CD4-positive, alpha-beta memory T cell (primary cell): ENCODE measurements at regions of chr17 and their contacts with region 1.

Region 1: DNA sequence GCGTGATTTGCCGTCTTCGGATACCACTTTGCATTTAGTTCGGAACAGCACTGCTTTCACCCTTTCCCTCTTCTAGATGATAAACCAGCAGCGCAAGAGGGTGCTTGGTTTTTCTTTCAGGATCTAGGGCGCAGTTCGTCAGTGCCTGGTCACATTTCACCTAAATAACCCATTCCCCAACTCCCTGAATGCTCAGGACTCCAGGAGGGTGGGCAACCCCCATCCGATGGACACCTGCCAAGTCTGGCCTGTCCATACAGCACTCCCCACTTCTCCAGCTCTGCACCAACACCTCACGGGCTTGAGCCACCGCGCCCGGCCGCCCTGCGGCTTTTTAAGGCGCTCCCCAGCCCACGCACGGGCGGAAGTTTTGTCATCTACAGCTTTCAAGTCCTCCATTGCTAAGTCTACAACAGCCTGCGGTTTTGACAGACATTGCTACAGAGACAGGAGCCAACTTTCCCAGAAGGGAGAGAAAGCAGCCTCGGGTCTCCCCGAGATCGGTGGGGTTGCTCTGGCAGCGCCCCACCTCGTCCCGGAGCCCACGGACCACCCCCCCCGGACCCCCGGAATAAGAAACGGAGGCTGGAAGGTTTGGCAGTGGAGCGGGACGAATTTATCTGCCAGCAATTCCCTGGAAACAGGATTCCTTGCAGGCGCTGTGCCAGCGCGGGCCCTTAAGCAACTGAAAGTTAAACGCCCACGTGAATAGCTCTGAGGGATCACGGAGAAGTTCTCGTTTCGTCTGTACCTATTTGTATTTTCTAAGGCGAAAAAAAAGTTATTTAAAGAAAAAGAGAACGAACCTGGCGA is 38.6 kb upstream of the SLFN13 start:
- DNase-seq: peak; percentile 65 to 86 (median 71)
- H3K4me3 ChIP-seq: peak overlapping the region; percentile 57 to 75
- H3K4me3 Mint-ChIP-seq: peak overlapping the region; percentile 94 to 98 (median 96)
- H3K27ac ChIP-seq: peak overlapping the region; percentile 69
- H3K27ac Mint-ChIP-seq: peak overlapping the region; percentile 94 to 99 (median 97)
- H3K4me1 ChIP-seq: peaks cover 42% of the 10 kb centered on the region
- H3K4me1 Mint-ChIP-seq: peaks cover 34 to 89% (median 63%) of the 10 kb centered on the region in 4 donors
- H3K27me3 ChIP-seq: no peaks in the 10 kb centered on the region
- H3K27me3 Mint-ChIP-seq: no peaks in the 10 kb centered on the region

Region 2: GRCh38 chr17:35170968-35171771 is 316.0 kb before region 1 on chr17:
- CTCF ChIA-PET with region 1: interaction called, 3 read pairs
- POLR2A ChIA-PET with region 1: interaction called, 10 read pairs
- intact Hi-C with region 1: loop called (anchors 1 kb)
- DNase-seq: peak; percentile 41 to 75 (median 72)
- H3K4me3 ChIP-seq: peak overlapping the region in 1 of 2 donors; percentile 18
- H3K4me3 Mint-ChIP-seq: peak overlapping the region; percentile 51 to 81 (median 68)
- H3K27ac ChIP-seq: no peak overlapping the region
- H3K27ac Mint-ChIP-seq: peak overlapping the region; percentile 82 to 93 (median 91)
- H3K4me1 ChIP-seq: peaks cover 41% of the 10 kb centered on the region
- H3K4me1 Mint-ChIP-seq: peaks cover 32 to 60% (median 42%) of the 10 kb centered on the region in 4 donors
- H3K27me3 ChIP-seq: no peaks in the 10 kb centered on the region
- H3K27me3 Mint-ChIP-seq: no peaks in the 10 kb centered on the region

Region 3: GRCh38 chr17:35432176-35433074 is 54.7 kb before region 1 on chr17 and contains the start of gene SLFN12:
- CTCF ChIA-PET with region 1: interaction called, 5 read pairs
- POLR2A ChIA-PET with region 1: interaction called, 39 read pairs
- intact Hi-C with region 1: loop called (anchors 2 kb)
- DNase-seq: peak; percentile 67 to 74 (median 72)
- H3K4me3 ChIP-seq: peak within 1 kb of the TSS; percentile 79 to 83
- H3K4me3 Mint-ChIP-seq: peak within 1 kb of the TSS; percentile 93 to 100 (median 97)
- H3K27ac ChIP-seq: peak within 1 kb of the TSS; percentile 61
- H3K27ac Mint-ChIP-seq: peak within 1 kb of the TSS; percentile 88 to 97 (median 94)
- H3K4me1 ChIP-seq: peaks cover 44% of the 10 kb centered on the region
- H3K4me1 Mint-ChIP-seq: peaks cover 32 to 68% (median 48%) of the 10 kb centered on the region in 4 donors
- H3K27me3 ChIP-seq: no peaks in the 10 kb centered on the region
- H3K27me3 Mint-ChIP-seq: no peaks in the 10 kb centered on the region
- total RNA-seq, gene SLFN12: 6.5 to 8.9 TPM

Region 4: GRCh38 chr17:35460354-35460851 is 26.7 kb before region 1 on chr17:
- CTCF ChIA-PET with region 1: interaction called, 7 read pairs
- POLR2A ChIA-PET with region 1: interaction called, 6 read pairs
- intact Hi-C with region 1: loop called (anchors 1 kb)
- DNase-seq: peak; percentile 69 to 81 (median 80)
- H3K4me3 ChIP-seq: peak overlapping the region in 1 of 2 donors; percentile 16
- H3K4me3 Mint-ChIP-seq: peak overlapping the region; percentile 62 to 91 (median 81)
- H3K27ac ChIP-seq: peak overlapping the region; percentile 24
- H3K27ac Mint-ChIP-seq: peak overlapping the region; percentile 77 to 95 (median 93)
- H3K4me1 ChIP-seq: peaks cover 15% of the 10 kb centered on the region
- H3K4me1 Mint-ChIP-seq: peaks cover 20 to 36% (median 28%) of the 10 kb centered on the region in 4 donors
- H3K27me3 ChIP-seq: no peaks in the 10 kb centered on the region
- H3K27me3 Mint-ChIP-seq: no peaks in the 10 kb centered on the region

Region 5: DNA sequence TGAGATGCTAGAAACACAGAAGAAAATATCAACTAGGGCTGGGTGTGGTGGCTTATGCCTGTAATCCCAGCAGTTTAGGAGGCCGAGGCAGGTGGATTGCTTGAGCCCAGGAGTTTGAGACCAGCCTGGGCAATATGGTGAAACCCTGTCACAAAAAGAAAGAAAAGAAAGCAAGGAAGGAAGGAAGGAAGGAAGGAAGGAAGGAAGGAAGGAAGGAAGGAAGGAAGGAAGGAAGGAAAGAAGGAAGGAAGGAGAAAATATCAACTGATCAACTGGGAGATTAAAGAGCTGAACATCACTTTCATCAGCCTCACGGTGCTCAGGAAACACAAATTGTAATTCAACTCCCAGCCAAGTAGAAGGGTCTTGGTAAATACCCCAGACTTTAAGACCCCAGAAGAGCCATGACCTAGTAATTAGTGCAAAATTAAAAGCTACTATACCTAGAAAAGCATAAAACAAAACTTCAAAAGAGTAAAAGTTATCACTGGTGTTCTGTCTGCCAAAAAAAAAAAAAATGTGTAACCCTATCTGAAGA is 10.8 kb before region 1 on chr17:
- CTCF ChIA-PET with region 1: interaction called, 4 read pairs
- POLR2A ChIA-PET with region 1: interaction called, 68 read pairs
- intact Hi-C with region 1: no loop called
- DNase-seq: no peak
- H3K4me3 ChIP-seq: no peak overlapping the region
- H3K4me3 Mint-ChIP-seq: peak overlapping the region in 2 of 8 donors; percentile 10 to 15
- H3K27ac ChIP-seq: no peak overlapping the region
- H3K27ac Mint-ChIP-seq: peak overlapping the region in 5 of 7 donors; percentile 19 to 89 (median 43)
- H3K4me1 ChIP-seq: peaks cover 14% of the 10 kb centered on the region
- H3K4me1 Mint-ChIP-seq: peaks cover 41 to 62% (median 50%) of the 10 kb centered on the region in 4 donors
- H3K27me3 ChIP-seq: no peaks in the 10 kb centered on the region
- H3K27me3 Mint-ChIP-seq: no peaks in the 10 kb centered on the region

Region 6: DNA sequence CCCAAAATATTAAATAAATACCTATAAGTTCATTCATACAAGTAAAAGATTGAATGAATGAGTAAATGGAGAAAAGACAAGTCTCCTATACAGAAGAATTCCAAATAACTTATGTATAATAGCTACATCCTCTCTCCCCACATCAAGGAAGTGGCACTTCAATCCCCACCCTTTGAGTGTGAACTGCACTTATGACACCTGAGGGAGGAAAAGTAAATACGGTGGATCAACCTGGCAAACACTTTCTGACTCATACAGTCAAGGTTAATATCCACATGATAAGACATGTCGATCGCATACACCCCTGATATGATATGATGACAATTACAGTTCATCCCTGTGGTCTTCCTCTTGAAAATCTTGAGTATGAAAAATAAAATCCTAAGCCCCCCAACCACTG is 32.3 kb after region 1 on chr17:
- CTCF ChIA-PET with region 1: interaction called, 19 read pairs
- POLR2A ChIA-PET with region 1: interaction called, 48 read pairs
- intact Hi-C with region 1: loop called (anchors 1 kb)
- DNase-seq: peak in 1 of 5 donors; percentile 57
- H3K4me3 ChIP-seq: peak overlapping the region in 1 of 2 donors; percentile 23
- H3K4me3 Mint-ChIP-seq: peak overlapping the region; percentile 17 to 83 (median 68)
- H3K27ac ChIP-seq: peak overlapping the region; percentile 0
- H3K27ac Mint-ChIP-seq: peak overlapping the region; percentile 27 to 91 (median 72)
- H3K4me1 ChIP-seq: peaks cover 74% of the 10 kb centered on the region
- H3K4me1 Mint-ChIP-seq: peaks cover 71 to 98% (median 86%) of the 10 kb centered on the region in 4 donors
- H3K27me3 ChIP-seq: no peaks in the 10 kb centered on the region
- H3K27me3 Mint-ChIP-seq: no peaks in the 10 kb centered on the region

Region 7: DNA sequence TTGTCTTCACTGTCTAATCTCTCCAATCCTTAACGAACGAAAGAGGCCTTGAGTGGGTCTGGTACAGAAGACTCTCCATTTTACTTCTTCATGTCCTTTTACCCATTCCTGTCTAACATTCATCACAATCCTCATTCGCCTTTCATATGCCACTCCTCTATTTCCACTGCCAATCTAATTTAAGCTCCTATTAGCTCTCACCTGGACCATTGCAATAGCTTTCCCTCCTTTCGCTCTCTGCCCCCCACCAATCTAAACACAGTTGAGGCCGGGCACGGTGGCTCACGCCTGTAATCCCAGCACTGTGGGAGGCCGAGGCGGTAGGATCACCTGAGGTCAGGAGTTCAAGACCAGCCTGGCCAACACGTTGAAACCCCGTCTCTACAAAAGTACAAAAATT is 79.8 kb after region 1 on chr17:
- CTCF ChIA-PET with region 1: no interaction called
- POLR2A ChIA-PET with region 1: no interaction called
- intact Hi-C with region 1: no loop called
- DNase-seq: no peak
- H3K4me3 ChIP-seq: no peak overlapping the region
- H3K4me3 Mint-ChIP-seq: peak overlapping the region; percentile 74 to 98 (median 83)
- H3K27ac ChIP-seq: no peak overlapping the region
- H3K27ac Mint-ChIP-seq: peak overlapping the region; percentile 18 to 86 (median 84)
- H3K4me1 ChIP-seq: peaks cover 24% of the 10 kb centered on the region
- H3K4me1 Mint-ChIP-seq: peaks cover 18 to 42% (median 28%) of the 10 kb centered on the region in 4 donors
- H3K27me3 ChIP-seq: no peaks in the 10 kb centered on the region
- H3K27me3 Mint-ChIP-seq: peaks cover 0 to 2% of the 10 kb centered on the region in 2 donors

Region 8: DNA sequence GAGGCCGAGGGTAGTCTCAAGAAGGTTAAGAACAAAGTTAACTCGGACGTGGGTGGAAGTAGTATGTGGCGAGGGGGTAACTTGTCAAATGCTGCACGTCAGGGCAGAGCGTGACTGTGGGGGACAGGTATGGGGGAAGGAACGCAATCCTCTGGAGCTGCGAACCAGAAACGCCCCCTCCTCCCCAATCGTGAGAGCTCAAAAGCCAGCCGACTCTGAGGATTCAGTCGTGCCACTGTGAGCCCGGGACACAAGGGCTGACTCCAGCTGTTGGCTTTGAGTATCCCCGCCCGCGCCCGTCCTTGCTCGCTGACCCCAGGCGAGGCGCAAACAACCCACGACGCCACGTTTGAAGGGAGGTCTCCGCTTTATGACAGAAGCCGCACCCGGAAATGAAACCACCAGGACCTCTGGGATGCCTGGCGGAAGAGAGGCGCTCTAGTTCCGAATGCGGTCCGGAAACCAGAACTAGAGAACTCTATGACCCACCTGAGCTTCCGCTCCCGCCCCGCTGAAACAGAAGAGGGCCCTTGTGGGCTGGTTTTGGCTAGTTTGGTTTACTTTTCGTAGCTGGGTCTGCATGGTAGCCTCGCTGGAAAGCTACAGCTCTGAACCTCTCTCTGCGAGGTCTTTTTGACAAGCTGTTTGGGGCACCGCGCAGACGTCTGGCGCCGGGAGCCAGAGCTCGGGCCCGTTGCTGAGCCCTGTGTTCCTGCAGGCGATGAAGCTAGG is 91.2 kb after region 1 on chr17 and contains the start of gene PEX12:
- CTCF ChIA-PET with region 1: no interaction called
- POLR2A ChIA-PET with region 1: interaction called, 16 read pairs
- intact Hi-C with region 1: no loop called
- DNase-seq: peak; percentile 87 to 95 (median 91)
- H3K4me3 ChIP-seq: peak within 1 kb of the TSS; percentile 81 to 90
- H3K4me3 Mint-ChIP-seq: peak within 1 kb of the TSS; percentile 95 to 99 (median 97)
- H3K27ac ChIP-seq: peak within 1 kb of the TSS; percentile 89
- H3K27ac Mint-ChIP-seq: peak within 1 kb of the TSS; percentile 97 to 100 (median 99)
- H3K4me1 ChIP-seq: peaks cover 24% of the 10 kb centered on the region
- H3K4me1 Mint-ChIP-seq: peaks cover 6 to 34% (median 26%) of the 10 kb centered on the region in 4 donors
- H3K27me3 ChIP-seq: no peaks in the 10 kb centered on the region
- H3K27me3 Mint-ChIP-seq: no peaks in the 10 kb centered on the region
- total RNA-seq, gene PEX12: 8.2 to 8.5 TPM